GM12878 (cell line): ENCODE measurements at regions of chr2 and their contacts with region 1.

Region 1: GRCh38 chr2:46915811-46916630 is 415 bp upstream of the MCFD2 start:
- DNase-seq: peak; percentile 40
- ATAC-seq: peak; percentile 87
- H3K4me3 ChIP-seq: peak overlapping the region; percentile 84
- H3K27ac ChIP-seq: peak overlapping the region; percentile 64
- H3K4me1 ChIP-seq: peaks cover 16% of the 10 kb centered on the region
- H3K27me3 ChIP-seq: no peaks in the 10 kb centered on the region
- CTCF ChIP-seq: no peak
- EP300 ChIP-seq: no peak
- POLR2A ChIP-seq: peak; percentile 82
- RAD21 ChIP-seq: no peak

Region 2: DNA sequence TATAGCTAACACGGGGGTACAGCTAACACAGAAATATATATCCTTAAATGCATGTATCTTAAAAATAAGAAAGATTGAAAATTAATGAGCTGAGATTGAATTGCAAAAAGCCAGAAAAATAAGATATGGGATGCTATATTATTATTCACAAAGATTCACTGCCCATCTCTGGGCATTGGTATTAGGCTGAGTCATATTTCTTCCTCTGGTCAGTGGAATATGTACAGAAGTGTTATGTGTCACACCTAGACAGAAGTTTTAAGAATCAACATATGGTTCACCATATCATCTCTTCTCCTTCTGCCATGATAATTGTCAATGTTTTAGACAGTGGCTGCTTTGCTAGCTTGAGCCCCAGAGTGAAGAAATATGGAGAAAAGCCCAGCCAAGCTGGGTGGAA is 13.6 kb after region 1 on chr2:
- CTCF ChIA-PET with region 1: interaction called, 13 read pairs
- POLR2A ChIA-PET with region 1: interaction called, 16 read pairs
- RAD21 ChIA-PET with region 1: no interaction called
- SMC1A ChIA-PET with region 1: interaction called, 10 read pairs
- in situ Hi-C with region 1: no loop called
- intact Hi-C with region 1: no loop called
- DNase-seq: no peak
- ATAC-seq: peak; percentile 15; the same call in 1 of the 3 replicates
- H3K4me3 ChIP-seq: no peak overlapping the region
- H3K27ac ChIP-seq: no peak overlapping the region
- H3K4me1 ChIP-seq: no peaks in the 10 kb centered on the region
- H3K27me3 ChIP-seq: no peaks in the 10 kb centered on the region
- CTCF ChIP-seq: no peak
- EP300 ChIP-seq: no peak
- POLR2A ChIP-seq: no peak
- RAD21 ChIP-seq: no peak